ENCODE measurements at regions of chr12 and their contacts with region 1.

Region 1: GRCh38 chr12:71636704-71637115 is 26.9 kb downstream of the ZFC3H1 start:
- DNase-seq: peak; percentile 50
- CTCF ChIP-seq: peak; percentile 74

Region 2: DNA sequence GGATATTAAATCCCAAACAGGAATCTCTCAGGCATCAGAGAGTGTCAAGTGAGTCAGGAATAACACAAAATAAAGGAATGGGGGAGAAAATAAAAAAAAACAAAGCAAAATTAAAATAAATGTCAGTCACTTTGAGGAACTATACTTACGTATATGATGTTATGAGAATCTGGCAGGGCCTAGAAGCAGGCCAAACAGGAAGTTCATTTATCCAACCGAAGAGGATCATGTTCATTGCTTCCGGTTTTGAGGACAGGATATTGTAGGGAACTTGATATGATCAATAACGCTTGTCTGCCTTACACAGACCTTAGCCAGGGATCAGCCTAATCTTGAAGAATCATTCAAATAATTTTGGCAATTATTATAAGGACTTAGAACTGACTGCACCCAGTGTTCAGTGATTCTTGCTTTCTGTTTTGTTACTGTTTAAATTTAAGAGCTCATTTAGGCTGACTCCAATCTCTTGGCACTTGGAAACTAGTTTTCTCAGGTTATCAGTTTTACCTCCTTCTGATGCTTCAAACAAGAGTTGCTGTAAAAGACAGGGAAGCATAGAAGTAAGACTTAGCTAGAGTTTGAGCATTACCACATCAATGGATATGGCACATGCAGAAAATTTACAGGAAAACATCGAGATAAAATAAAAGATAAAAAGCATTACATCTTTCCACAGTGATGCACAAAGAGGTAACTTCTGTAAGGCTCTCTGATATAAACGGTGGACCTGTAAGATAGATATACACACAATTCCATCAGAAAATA is 26.5 kb before region 1 on chr12:
- CTCF ChIA-PET with region 1: interaction called, 15 read pairs
- POLR2A ChIA-PET with region 1: no interaction called
- DNase-seq: no peak
- CTCF ChIP-seq: no peak

Region 3: DNA sequence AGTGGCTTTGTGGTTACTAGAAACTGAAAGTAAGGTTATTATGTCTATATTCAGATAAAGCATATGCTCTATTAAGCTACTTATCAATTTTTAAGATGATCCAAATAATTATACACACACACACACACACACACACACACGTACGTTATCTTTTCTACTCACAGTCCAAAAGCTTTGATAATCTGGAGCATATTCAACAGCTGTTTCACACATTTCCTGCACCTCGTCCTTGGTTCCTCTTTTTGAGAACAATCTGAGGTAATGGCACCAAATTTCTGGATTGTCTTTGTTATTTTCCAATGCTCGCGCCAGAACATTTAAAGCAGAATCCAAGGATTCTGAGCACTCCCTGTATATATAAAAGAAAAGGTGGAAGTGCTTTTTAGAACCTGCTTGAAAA is 10.6 kb before region 1 on chr12:
- CTCF ChIA-PET with region 1: interaction called, 43 read pairs
- POLR2A ChIA-PET with region 1: no interaction called
- DNase-seq: peak; percentile 19
- CTCF ChIP-seq: no peak

Region 4: DNA sequence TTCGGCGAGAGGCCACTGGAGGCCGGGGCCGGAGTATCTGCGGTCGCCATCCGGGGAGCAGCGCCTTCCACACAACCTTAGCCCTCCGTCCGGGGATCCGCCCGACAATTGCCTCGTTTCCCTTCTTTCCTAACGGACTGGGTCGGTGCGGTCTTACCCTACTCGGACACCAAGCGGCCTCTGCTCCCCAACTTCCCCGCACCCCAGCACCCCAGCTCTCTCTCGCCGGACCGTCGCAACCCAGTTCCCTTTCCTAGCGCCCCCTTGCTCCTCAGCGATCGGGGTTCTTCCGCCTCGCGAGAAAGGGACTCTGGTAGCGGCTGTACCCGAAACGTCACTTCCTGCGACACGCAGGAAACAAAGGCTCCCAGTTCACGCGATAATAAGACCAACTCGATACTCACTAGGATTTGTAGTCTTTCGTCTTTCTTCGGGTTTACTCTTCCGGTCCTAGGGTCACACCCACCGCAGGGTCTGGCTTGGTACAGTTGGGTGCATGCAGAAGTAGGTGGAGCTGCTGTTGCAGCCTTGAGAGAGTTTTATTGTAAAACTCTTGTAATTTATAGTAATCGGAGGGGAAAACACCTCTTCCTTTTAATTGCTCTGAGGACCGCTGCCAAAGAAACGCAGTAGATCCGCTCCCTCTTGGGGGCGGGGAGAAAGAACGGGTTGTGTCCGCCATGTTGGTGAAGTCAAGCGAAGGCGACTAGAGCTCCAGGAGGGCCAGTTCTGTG is 27.0 kb after region 1 on chr12 and contains the start of gene ZFC3H1:
- CTCF ChIA-PET with region 1: interaction called, 37 read pairs
- POLR2A ChIA-PET with region 1: interaction called, 4 read pairs
- DNase-seq: peak; percentile 92
- CTCF ChIP-seq: peak; percentile 33

Measured in GM10248 (cell line).